Activated T-helper 1 cell treated with anti-CD3 and anti-CD28 coated beads, Interleukin-12 subunit alpha, Interleukin-12 subunit beta, Interleukin-2, Interleukin-4 antibody, amounts not matched to agents 30 ng/mL and 10 ng/mL and 1 ng/mL, durations not matched to agents 14 hours and 24 hours and 36 hours (primary cell): ENCODE measurements at regions of chr4 and their contacts with region 1.

Region 1: DNA sequence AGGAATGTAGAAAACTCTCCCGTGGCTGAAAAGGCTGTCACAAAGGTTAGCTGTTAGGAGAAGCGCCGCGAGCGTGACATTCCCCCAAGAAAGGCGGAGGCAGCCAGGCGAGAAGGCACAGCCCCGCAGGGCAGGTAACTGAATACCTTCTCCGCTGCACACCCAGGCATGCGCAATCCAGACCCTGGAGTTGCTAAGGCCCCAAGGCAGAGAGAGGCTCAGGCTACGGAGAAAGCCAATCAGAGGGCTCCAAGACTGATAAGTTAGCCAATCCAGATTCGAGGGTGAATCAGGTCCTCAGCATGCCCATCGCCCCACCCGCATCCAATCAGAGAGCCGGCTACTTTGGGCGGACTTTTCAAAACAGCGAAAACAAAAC is 485 bp upstream of the CCNG2 start:
- DNase-seq: peak; percentile 95
- H3K4me3 Mint-ChIP-seq: peak overlapping the region; percentile 95
- H3K27ac Mint-ChIP-seq: peak overlapping the region; percentile 96
- H3K4me1 Mint-ChIP-seq: peaks cover 35% of the 10 kb centered on the region
- H3K27me3 Mint-ChIP-seq: no peaks in the 10 kb centered on the region

Region 2: DNA sequence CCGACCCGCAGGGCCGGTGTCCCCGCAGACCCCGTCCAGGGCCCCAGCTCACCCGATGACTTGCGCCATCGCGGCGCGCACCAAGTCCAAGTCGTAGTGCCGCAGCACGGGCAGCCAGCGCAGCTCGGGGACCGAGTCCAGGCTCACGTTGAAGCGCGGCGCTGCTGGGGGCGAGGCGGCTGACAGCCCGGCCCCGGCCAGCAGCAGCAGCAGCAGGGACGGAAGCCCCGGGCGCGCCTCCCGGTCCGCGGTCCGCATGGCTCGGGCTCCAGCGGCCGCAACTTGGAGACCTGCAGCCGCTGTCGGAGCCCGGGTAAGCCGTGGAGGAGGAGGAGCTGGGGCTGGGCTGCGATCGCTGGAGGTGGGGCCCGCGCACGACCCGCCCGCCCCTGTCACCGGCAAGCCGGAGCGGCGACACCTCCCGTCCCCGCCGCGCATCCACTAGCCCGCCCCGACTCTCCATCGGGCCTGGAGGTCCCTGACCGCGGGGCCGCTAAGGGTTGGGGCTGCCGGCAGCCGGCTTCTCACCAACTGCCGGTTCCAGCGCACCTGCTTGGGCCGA is 1215.7 kb before region 1 on chr4 and contains the start of gene NAAA:
- intact Hi-C with region 1: loop called (anchors 5 kb)
- DNase-seq: peak; percentile 83
- H3K4me3 Mint-ChIP-seq: peak within 1 kb of the TSS; percentile 98
- H3K27ac Mint-ChIP-seq: peak within 1 kb of the TSS; percentile 96
- H3K4me1 Mint-ChIP-seq: peaks cover 32% of the 10 kb centered on the region
- H3K27me3 Mint-ChIP-seq: no peaks in the 10 kb centered on the region
- total RNA-seq, gene NAAA: 31.3 and 31.8 TPM in 2 replicates

Region 3: GRCh38 chr4:76305971-76306881 is 850.3 kb before region 1 on chr4 and contains the start of gene STBD1:
- intact Hi-C with region 1: loop called (anchors 5 kb)
- DNase-seq: peak; percentile 24
- H3K4me3 Mint-ChIP-seq: peak within 1 kb of the TSS; percentile 68
- H3K27ac Mint-ChIP-seq: peak within 1 kb of the TSS; percentile 24
- H3K4me1 Mint-ChIP-seq: peaks cover 48% of the 10 kb centered on the region
- H3K27me3 Mint-ChIP-seq: peaks cover 16% of the 10 kb centered on the region
- total RNA-seq, gene STBD1: 0.51 and 0.57 TPM in 2 replicates

Region 4: DNA sequence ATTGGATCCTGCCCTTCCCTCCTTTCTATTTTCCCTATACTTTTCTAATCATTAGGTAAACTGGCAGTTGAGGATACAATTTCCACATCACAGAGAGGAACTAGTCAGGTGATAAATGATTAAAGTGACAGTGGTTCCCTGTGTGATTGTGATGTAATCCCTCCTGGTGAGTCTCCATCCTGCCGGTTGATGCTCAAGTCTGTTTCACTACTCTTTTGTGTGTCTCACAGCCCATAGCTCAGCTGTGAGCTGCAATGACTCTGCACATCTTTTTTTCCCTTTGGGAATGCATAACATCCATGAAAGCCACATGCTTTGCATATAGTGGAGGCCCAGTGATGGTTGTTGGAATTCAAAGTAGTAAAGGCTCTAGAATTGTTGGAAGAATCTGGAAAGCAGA is 141.1 kb before region 1 on chr4:
- intact Hi-C with region 1: no loop called
- DNase-seq: no peak
- H3K4me3 Mint-ChIP-seq: peak overlapping the region; percentile 13
- H3K27ac Mint-ChIP-seq: no peak overlapping the region
- H3K4me1 Mint-ChIP-seq: peaks cover 29% of the 10 kb centered on the region
- H3K27me3 Mint-ChIP-seq: peaks cover 7% of the 10 kb centered on the region

Region 5: GRCh38 chr4:77052352-77052751 is 104.2 kb before region 1 on chr4:
- intact Hi-C with region 1: loop called (anchors 1 kb)
- DNase-seq: peak; percentile 29
- H3K4me3 Mint-ChIP-seq: no peak overlapping the region
- H3K27ac Mint-ChIP-seq: no peak overlapping the region
- H3K4me1 Mint-ChIP-seq: peaks cover 6% of the 10 kb centered on the region
- H3K27me3 Mint-ChIP-seq: no peaks in the 10 kb centered on the region

Region 6: DNA sequence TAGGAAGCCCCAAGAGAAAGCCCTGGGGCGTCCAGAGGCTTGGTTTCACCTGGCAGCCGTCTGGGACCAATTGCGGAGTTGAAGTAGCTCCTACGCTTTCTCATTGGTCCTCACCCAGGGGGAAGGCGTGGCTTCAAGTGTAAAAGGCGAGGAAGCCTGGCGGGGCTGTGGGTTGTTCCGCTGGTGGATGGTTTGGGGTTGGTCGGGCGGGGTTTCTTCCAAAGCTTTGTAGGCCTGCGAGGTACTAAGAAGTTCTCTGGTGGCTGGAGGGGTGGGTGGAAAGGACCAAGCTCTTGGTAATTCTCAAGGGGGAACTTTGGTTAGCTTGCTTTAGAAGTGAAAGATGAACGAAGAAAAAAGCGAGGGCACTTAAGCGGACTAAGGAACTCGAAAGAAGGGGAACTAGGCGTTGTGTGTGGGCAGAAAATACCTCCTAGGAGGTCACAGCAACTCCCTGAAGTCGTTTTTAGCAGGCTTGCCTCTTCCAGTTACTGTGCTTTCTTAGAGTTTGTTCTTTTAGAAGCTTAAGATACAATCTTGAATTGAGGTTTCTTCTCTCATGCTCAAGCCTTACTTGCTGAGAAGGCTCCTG is 37.1 kb after region 1 on chr4:
- intact Hi-C with region 1: loop called (anchors 1 kb)
- DNase-seq: peak; percentile 67
- H3K4me3 Mint-ChIP-seq: peak overlapping the region; percentile 83
- H3K27ac Mint-ChIP-seq: peak overlapping the region; percentile 79
- H3K4me1 Mint-ChIP-seq: peaks cover 20% of the 10 kb centered on the region
- H3K27me3 Mint-ChIP-seq: peaks cover 6% of the 10 kb centered on the region

Region 7: DNA sequence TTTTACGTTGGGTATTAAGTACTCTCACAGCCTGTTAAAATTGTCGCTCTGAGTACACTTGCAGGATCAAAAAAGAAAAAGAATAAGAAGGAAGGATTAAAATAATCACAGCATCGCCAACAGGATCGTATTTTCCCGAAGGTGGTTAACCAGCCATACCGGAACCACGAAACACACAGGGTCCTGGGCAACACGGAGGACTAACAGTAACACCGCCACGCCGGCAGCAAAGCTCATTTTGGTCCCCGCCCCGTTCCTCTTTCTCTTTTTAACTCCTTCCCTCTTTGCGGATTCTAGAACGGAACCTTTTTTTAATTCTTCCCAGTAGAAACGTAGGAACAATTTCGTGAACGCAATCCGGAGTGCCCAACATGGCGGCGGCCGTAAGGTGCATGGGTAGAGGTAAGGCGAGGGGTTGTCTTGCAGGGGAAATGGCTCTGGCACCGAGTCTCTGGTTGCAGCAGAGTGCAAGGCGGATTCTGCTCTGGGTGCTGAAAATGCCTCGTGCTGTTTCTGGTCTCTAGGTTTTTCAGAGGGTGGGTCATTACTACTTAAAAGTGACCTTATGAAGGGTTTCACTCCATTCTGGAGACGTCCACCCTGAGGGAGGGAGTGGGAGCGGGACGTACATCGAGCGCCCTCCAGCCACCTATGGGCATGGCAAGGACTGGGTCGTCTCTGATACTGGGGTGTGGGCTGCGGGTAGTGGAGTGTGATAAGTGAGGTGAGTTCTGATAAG is 706.1 kb after region 1 on chr4 and contains the start of gene MRPL1:
- intact Hi-C with region 1: loop called (anchors 5 kb)
- DNase-seq: peak; percentile 84
- H3K4me3 Mint-ChIP-seq: peak within 1 kb of the TSS; percentile 90
- H3K27ac Mint-ChIP-seq: peak within 1 kb of the TSS; percentile 94
- H3K4me1 Mint-ChIP-seq: peaks cover 48% of the 10 kb centered on the region
- H3K27me3 Mint-ChIP-seq: no peaks in the 10 kb centered on the region
- total RNA-seq, gene MRPL1: 72.7 and 75.0 TPM in 2 replicates